Dendritic cell treated with granulocyte-macrophage colony-stimulating factor and Interleukin-4, amounts not matched to agents 40 ng/mL and 50 ng/mL, for 4 days (primary cell): ENCODE measurements at regions of chr12 and their contacts with region 1.

Region 1: DNA sequence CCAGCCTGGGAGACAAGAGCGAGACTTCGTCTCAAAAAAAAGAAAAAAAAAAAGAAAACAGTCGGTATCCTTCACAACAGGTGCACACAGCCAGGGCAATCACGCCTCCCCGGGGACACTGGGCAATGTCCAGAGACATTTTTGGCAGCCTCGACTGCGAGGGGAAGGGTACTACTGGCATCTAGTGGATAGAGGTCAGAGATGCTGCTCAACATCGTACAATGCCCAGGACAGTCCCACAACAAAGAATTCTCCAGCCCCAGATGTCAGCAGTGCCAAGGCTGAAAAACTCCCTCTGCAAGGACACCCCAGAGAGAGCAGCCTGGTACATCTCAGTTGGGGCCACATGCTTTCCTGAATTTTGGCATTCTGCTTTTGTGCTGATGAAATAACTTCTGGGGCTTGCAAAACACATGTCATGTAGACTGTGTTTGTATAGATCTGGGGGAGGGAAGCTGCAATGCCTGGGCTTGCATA is 21.5 kb downstream of the ALDH2 start:
- H3K4me3 Mint-ChIP-seq: no peak overlapping the region
- H3K27ac Mint-ChIP-seq: no peak overlapping the region
- H3K4me1 Mint-ChIP-seq: no peaks in the 10 kb centered on the region
- H3K27me3 Mint-ChIP-seq: no peaks in the 10 kb centered on the region

Region 2: GRCh38 chr12:111753144-111753881 is 34.9 kb before region 1 on chr12:
- intact Hi-C with region 1: loop called (anchors 1 kb)
- H3K4me3 Mint-ChIP-seq: no peak overlapping the region
- H3K27ac Mint-ChIP-seq: no peak overlapping the region
- H3K4me1 Mint-ChIP-seq: peaks cover 15% of the 10 kb centered on the region
- H3K27me3 Mint-ChIP-seq: no peaks in the 10 kb centered on the region

Region 3: DNA sequence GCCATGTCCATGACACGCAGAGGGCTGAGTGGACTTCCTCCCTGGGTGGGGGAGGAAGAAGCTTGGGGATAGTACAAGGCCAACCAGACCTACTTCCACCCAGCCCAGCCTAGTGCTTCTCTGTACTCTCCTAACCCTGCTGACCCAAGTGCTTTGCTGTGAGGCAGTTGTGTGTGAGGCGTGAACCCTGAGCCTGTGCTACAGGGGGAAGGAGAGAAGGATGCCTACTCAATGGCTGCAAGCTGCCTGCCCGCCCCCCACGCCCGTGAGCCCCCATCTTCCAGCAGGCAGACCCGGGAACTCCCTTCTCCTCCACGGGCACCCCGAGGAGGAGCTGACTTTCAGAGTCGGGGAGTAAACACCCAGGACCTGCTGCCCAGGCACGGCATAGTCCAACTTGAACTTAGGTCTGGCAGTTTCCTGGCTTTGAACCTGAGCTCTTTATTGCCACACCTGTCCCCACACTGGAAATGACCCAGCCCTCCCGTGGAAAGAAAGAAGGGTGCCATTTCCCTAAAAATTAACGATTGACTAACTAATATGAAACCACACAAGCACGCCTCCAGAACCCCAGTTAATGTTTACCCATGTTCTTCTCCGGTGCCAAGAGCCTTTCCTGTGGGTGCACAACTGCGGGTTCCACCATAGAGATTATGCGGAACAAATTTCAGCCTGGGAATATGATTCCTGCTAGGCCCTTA is 10.7 kb before region 1 on chr12:
- intact Hi-C with region 1: loop called (anchors 1 kb)
- H3K4me3 Mint-ChIP-seq: peak overlapping the region; percentile 32
- H3K27ac Mint-ChIP-seq: peak overlapping the region; percentile 98
- H3K4me1 Mint-ChIP-seq: peaks cover 79% of the 10 kb centered on the region
- H3K27me3 Mint-ChIP-seq: no peaks in the 10 kb centered on the region